SK-N-SH (cell line): ENCODE measurements at regions of chr1 and their contacts with region 1.

Region 1: GRCh38 chr1:160098852-160099561 is 588 bp upstream of the IGSF8 start:
- DNase-seq: peak; percentile 98
- H3K4me3 ChIP-seq: peak overlapping the region; percentile 36 to 44; a peak in 3 of 4 replicates
- H3K27ac ChIP-seq: peak overlapping the region; percentile 35 to 55; a peak in 3 of 4 replicates
- H3K4me1 ChIP-seq: peaks cover 7 to 28% of the 10 kb centered on the region in 2 experiments; a peak in 1 of 4 replicates
- H3K27me3 ChIP-seq: no peaks in the 10 kb centered on the region
- CTCF ChIP-seq: no peak
- EP300 ChIP-seq: no peak
- RAD21 ChIP-seq: no peak

Region 2: DNA sequence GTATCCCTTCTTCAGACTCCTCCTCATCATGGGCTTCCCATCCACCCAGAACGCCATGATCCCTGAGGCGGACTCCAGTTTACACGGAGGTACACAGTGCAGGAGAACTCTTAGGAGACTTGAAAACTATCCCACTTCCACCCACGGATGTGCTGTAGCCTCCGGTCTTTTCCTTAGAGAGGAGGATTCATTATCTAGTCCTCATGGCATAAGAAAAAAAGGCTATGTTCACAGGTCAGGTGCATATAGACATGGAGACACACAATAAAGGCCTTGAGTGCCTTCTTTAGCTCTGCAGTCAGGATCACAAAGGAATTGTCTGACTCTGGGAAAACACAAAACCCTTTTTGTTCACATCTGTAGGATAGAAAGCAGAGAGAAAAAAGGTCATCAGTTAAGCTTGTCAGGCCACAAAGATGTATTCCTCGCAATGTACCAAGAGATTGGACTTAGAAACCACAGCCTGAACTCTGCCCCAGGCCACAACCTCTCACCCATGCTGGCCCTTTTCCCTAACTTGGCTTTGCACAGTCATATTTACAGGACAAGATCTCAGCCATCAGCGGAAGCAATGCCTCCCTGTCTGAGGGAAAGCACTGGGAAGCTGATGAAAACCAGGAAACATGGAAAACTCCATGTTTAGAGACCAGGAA is 393.6 kb before region 1 on chr1:
- CTCF ChIA-PET with region 1: no interaction called
- POLR2A ChIA-PET with region 1: no interaction called
- DNase-seq: no peak
- H3K4me3 ChIP-seq: no peak overlapping the region
- H3K27ac ChIP-seq: no peak overlapping the region
- H3K4me1 ChIP-seq: no peaks in the 10 kb centered on the region
- H3K27me3 ChIP-seq: no peaks in the 10 kb centered on the region
- CTCF ChIP-seq: no peak
- EP300 ChIP-seq: no peak
- RAD21 ChIP-seq: no peak

Region 3: DNA sequence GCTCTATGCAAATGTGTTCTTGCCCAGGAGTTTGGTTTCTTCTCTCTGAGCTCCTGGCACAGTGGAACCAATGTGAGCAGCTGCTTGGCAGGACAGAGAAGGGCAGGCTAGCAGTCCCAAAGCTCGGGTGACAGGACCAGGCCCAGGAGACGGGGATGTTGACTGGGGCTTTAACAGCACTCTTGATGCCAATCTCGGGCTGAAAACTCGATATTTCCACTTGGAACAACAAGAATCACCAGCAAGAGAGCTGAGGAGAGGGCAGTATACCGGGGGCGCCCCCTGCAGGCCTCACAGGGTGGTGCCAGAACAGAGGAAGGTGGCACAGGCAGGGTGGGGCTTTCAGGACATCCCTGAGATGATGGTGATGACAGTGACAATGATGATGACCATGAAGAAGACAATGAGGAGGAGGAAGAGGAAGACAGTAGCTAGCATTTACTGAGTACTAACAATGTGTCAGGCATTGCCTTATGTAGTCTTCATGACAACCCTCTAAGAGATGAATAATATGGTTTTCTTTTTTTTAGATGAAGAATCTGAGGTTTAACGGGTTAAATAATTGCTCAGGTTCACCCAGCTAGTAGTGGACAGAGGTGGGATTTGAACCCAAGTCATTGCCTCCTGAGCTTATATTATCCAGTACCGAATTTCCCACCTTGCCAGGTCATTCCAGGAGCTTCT is 20.4 kb before region 1 on chr1:
- CTCF ChIA-PET with region 1: interaction called, 132 read pairs
- POLR2A ChIA-PET with region 1: no interaction called
- DNase-seq: peak; percentile 68
- H3K4me3 ChIP-seq: no peak overlapping the region; a peak in 1 of 4 replicates
- H3K27ac ChIP-seq: no peak overlapping the region
- H3K4me1 ChIP-seq: peaks cover 0 to 10% of the 10 kb centered on the region in 2 experiments; a peak in 1 of 4 replicates
- H3K27me3 ChIP-seq: peaks cover 36% of the 10 kb centered on the region
- CTCF ChIP-seq: peak; percentile 79
- EP300 ChIP-seq: no peak
- RAD21 ChIP-seq: peak; percentile 54

Region 4: DNA sequence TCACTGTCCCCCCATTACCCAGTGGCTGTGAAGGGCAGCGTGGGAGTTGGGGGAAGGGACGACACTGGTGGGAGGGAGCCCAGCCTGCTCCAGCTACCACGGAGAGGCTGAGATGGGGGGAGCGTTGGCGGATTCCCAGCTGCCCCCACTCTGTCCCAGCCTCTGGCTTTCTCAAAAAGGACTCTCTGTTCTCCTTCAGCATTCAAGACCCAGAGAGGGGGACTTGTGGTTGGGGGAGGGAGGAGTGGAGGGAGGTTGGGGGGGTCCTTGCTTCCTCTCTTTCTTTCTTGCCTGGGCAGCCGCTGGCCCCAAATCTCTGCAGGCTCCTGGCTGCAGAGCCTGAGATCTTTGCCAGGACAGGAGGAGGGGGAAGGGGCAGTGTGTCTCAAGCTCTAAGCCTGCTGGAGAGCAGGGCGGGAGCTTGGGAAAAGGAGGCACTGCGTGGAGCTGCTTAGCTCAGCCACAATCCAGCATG is 18.7 kb after region 1 on chr1:
- CTCF ChIA-PET with region 1: interaction called, 18 read pairs
- POLR2A ChIA-PET with region 1: no interaction called
- DNase-seq: no peak
- H3K4me3 ChIP-seq: no peak overlapping the region
- H3K27ac ChIP-seq: no peak overlapping the region
- H3K4me1 ChIP-seq: no peaks in the 10 kb centered on the region
- H3K27me3 ChIP-seq: peaks cover 11% of the 10 kb centered on the region; the same call in 1 of the 2 replicates
- CTCF ChIP-seq: no peak
- EP300 ChIP-seq: no peak
- RAD21 ChIP-seq: no peak

Region 5: GRCh38 chr1:160219062-160219929 is 120.3 kb after region 1 on chr1:
- CTCF ChIA-PET with region 1: interaction called, 63 read pairs
- POLR2A ChIA-PET with region 1: interaction called, 8 read pairs
- DNase-seq: peak; percentile 55
- H3K4me3 ChIP-seq: no peak overlapping the region; a peak in 1 of 4 replicates
- H3K27ac ChIP-seq: peak overlapping the region; percentile 31 to 55
- H3K4me1 ChIP-seq: peaks cover 11 to 18% of the 10 kb centered on the region in 2 experiments; a peak in 3 of 4 replicates
- H3K27me3 ChIP-seq: no peaks in the 10 kb centered on the region
- CTCF ChIP-seq: peak; percentile 72
- EP300 ChIP-seq: no peak
- RAD21 ChIP-seq: peak; percentile 81

Region 6: DNA sequence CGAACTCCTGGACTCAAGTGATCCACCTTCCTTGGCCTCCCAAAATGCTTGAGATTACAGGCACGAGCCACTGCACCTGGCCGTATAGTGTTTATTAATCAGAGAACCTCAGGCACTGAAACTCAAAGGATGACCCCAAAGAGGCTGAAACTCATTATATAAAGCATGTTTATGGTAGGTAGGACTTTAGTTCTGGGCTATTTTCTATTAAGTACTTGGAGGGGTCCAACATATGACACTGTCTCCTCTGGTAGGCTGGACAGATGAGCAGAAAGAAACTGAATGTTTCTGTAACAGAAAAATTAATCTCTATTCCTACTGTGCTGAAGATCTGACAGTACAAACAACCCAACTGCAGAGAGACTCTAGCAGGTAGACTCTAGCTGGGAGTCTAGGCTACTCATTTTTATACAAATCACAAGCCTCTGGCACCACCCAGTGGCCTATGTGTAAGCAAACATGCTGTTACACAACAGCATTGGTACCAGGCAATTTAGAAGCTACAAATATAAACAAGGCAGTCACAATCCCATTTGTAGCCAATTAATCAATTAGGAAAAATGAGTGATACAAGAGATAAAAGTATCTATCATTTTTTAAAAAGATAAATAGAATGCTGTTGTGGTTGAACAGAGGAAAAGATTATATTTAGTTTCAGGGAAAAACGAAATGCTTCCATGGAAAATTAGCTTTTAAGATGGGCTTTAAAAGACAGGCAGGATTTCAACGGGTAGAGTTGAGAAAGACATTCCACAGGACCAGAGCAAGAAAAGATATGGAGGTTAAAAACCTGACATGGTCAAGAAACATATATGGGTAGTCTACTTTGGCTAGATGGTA is 152.9 kb after region 1 on chr1:
- CTCF ChIA-PET with region 1: interaction called, 105 read pairs
- POLR2A ChIA-PET with region 1: interaction called, 3 read pairs
- DNase-seq: peak; percentile 68
- H3K4me3 ChIP-seq: no peak overlapping the region
- H3K27ac ChIP-seq: no peak overlapping the region
- H3K4me1 ChIP-seq: peaks cover 0 to 17% of the 10 kb centered on the region in 2 experiments; a peak in 2 of 4 replicates
- H3K27me3 ChIP-seq: no peaks in the 10 kb centered on the region
- CTCF ChIP-seq: peak; percentile 84
- EP300 ChIP-seq: no peak
- RAD21 ChIP-seq: peak; percentile 92

Region 7: DNA sequence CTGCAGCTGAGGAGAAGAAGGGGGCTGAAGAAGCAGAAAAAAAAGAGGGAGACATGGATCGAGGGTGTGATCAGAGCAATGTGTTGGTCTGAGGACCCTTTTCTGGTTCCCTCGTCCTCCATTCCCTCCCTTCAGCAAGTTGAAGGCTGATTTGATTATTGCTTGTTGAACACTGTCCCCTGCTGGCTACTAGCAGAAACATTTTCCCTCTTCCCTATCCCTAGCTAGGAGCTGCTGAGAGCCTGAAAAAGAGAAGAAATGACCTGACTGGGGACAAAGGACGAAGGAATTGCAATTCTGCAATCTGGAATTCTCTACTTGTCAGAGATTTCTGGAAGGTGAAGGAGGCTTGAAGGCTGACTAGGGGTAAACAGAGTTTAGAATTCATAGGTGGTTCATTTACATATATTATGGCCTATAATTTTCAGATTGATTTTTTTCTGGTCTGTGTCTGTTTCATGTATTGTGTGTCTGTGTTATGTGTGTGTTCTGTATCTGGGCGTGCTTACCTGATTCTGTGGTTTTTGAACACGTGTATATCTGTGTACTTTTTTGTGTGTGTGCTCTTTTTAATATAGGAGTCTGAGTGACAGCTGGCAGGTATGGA is 277.6 kb after region 1 on chr1:
- CTCF ChIA-PET with region 1: interaction called, 23 read pairs
- POLR2A ChIA-PET with region 1: no interaction called
- DNase-seq: peak; percentile 79
- H3K4me3 ChIP-seq: no peak overlapping the region; a peak in 1 of 4 replicates
- H3K27ac ChIP-seq: no peak overlapping the region
- H3K4me1 ChIP-seq: peaks cover 0 to 9% of the 10 kb centered on the region in 2 experiments; a peak in 2 of 4 replicates
- H3K27me3 ChIP-seq: no peaks in the 10 kb centered on the region
- CTCF ChIP-seq: peak; percentile 93
- EP300 ChIP-seq: no peak
- RAD21 ChIP-seq: peak; percentile 92